CD4-positive, alpha-beta memory T cell (primary cell): ENCODE measurements at regions of chr1 and their contacts with region 1.

Region 1: DNA sequence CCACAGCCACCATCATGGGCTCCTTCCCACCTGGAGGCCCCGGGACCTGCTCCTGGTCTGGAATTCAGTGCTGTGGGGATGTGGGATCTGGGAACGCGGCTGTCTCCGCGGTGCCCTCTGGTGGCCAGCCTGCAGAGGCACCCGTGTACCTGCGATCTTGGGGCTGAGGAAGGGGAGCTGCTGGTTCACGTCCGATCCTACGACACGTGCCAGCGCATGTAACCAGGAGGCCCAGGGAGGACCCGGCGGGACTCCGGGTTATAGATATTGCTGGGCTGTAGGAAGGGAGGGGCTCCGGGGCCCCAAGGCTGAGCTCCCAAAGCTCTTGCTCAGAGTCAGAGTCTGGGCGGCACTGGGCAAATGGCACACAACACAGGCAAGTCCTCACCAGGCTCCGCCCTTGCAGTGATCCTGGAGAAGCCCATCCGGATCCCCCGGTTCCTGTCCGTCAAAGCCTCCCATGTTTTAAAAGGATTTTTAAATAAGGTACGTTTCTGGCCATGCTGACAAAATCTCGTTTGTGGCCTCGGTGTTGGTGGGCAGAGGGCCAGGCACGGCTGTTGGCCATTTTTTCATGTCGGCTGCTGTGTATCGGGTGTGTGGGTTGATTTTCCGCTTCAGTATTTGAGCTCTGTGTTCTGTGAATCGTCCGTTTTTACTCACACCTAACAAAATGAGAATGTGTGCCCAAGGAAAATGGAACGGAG is 20.1 kb downstream of the FAAP20 start:
- DNase-seq: peak in 4 of 5 donors; percentile 30 to 44 (median 40)
- H3K4me3 ChIP-seq: peak overlapping the region in 1 of 2 donors; percentile 35
- H3K4me3 Mint-ChIP-seq: peak overlapping the region; percentile 38 to 85 (median 68)
- H3K27ac ChIP-seq: no peak overlapping the region
- H3K27ac Mint-ChIP-seq: peak overlapping the region in 3 of 7 donors; percentile 46 to 57 (median 47)
- H3K4me1 ChIP-seq: peaks cover 8% of the 10 kb centered on the region
- H3K4me1 Mint-ChIP-seq: peaks cover 0 to 27% (median 3%) of the 10 kb centered on the region in 4 donors
- H3K27me3 ChIP-seq: no peaks in the 10 kb centered on the region
- H3K27me3 Mint-ChIP-seq: no peaks in the 10 kb centered on the region

Region 2: DNA sequence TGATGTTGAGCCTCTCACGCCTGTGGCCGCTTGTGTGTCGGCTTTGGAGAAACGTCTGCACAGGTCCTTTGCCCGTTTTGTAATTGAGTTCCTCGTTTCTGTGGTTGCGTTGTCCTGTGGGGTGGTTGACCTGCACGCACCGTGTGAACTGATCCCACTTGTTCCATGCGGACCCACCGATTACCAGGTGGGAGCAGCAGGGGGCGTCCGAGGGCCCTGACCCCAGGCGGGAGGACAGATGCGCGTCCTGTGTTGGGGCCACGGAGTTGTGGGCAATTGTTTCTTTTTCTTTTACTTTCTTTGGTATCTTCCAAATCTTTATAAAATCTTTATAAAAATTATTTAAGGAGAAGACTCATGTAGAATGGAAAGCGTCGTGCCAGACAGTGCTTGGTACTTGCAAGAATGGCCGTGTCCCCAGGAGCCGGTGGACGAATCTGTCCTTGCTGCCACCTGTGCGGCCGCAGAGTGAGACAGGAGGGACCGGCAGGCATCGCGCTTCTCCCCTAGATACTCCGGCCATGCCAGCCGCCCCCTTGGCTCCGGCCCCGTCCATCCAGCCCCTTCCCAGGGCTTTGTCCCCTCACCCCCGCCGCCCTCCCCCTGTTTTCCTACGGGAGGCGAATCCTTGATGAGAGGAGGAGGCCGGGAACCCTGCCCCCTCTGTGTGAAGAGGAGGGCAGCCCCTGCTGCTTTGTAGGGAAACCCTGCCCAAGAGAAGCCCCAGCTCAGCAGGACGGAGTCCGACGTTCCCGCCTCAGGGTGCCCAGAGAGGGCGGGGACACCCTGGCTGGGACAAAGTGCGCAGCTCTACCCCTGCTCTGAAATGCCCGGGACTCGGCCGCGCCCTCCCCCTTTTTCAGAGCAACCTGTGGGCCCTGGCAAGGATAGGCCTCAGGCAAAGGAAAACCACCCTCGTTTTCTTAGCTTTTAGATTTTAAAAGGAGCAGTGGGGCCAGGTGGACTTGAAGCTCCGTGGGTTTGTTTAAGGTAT is 82.6 kb before region 1 on chr1:
- CTCF ChIA-PET with region 1: interaction called, 9 read pairs
- POLR2A ChIA-PET with region 1: no interaction called
- intact Hi-C with region 1: loop called (anchors 1 kb)
- DNase-seq: peak in 4 of 5 donors; percentile 17 to 28 (median 26)
- H3K4me3 ChIP-seq: no peak overlapping the region
- H3K4me3 Mint-ChIP-seq: no peak overlapping the region
- H3K27ac ChIP-seq: no peak overlapping the region
- H3K27ac Mint-ChIP-seq: no peak overlapping the region
- H3K4me1 ChIP-seq: no peaks in the 10 kb centered on the region
- H3K4me1 Mint-ChIP-seq: peaks cover 4 to 6% (median 5%) of the 10 kb centered on the region in 4 donors
- H3K27me3 ChIP-seq: no peaks in the 10 kb centered on the region
- H3K27me3 Mint-ChIP-seq: no peaks in the 10 kb centered on the region

Region 3: DNA sequence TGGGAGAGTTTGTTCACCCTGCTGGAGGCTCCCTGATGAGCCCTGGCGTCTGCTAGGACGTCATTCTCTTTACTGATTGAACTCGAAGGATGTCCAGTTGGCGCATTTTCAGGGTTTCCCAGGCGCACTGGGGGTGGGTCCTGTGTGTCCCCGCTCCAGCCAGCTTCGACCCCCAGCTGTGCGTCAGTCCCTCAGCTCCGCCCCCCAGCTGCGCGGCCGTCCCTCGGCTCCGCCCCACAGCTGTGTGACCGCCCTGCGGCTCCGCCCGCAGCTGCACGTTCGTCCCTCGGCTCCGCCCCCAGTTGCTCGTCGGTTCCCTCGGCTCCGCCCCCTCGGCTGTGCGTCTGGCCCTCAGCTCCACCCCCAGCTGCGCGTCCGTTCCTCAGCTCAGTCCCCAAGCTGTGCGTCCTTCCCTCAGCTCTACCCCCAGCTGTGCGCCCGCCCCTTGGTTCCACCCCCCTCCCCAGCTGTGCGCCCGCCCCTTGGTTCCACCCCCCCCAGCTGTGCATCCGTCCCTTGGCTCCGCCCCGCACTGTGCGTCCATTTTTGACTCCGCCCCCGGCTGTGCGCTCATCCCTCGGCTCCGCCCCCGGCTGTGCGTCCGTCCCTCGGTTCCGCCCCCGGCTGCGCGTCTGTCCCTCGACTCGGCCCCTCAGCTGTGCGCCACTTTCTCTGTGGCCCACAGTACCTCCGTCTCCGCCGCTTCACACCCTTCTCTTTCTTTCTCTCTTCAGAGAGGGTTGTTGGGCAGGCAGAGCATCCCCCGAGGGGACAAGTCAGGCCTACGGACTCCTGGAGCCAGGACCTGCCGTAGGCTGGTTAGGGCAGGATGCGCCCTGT is 41.2 kb before region 1 on chr1:
- CTCF ChIA-PET with region 1: interaction called, 24 read pairs
- POLR2A ChIA-PET with region 1: no interaction called
- intact Hi-C with region 1: loop called (anchors 1 kb)
- DNase-seq: peak; percentile 97 to 98 (median 98)
- H3K4me3 ChIP-seq: peak overlapping the region; percentile 61 to 77
- H3K4me3 Mint-ChIP-seq: peak overlapping the region; percentile 82 to 92 (median 85)
- H3K27ac ChIP-seq: peak overlapping the region; percentile 64
- H3K27ac Mint-ChIP-seq: peak overlapping the region; percentile 81 to 98 (median 97)
- H3K4me1 ChIP-seq: peaks cover 11% of the 10 kb centered on the region
- H3K4me1 Mint-ChIP-seq: peaks cover 10 to 47% (median 28%) of the 10 kb centered on the region in 4 donors
- H3K27me3 ChIP-seq: no peaks in the 10 kb centered on the region
- H3K27me3 Mint-ChIP-seq: no peaks in the 10 kb centered on the region

Region 4: GRCh38 chr1:2148691-2149090 is 25.8 kb before region 1 on chr1:
- CTCF ChIA-PET with region 1: interaction called, 31 read pairs
- POLR2A ChIA-PET with region 1: interaction called, 3 read pairs
- intact Hi-C with region 1: no loop called
- DNase-seq: peak; percentile 74 to 89 (median 81)
- H3K4me3 ChIP-seq: peak overlapping the region in 1 of 2 donors; percentile 44
- H3K4me3 Mint-ChIP-seq: no peak overlapping the region
- H3K27ac ChIP-seq: peak overlapping the region; percentile 58
- H3K27ac Mint-ChIP-seq: no peak overlapping the region
- H3K4me1 ChIP-seq: peaks cover 47% of the 10 kb centered on the region
- H3K4me1 Mint-ChIP-seq: peaks cover 6 to 29% (median 13%) of the 10 kb centered on the region in 4 donors
- H3K27me3 ChIP-seq: no peaks in the 10 kb centered on the region
- H3K27me3 Mint-ChIP-seq: no peaks in the 10 kb centered on the region

Region 5: GRCh38 chr1:2163205-2163604 is 11.3 kb before region 1 on chr1:
- CTCF ChIA-PET with region 1: interaction called, 13 read pairs
- POLR2A ChIA-PET with region 1: no interaction called
- intact Hi-C with region 1: no loop called
- DNase-seq: peak in 1 of 5 donors; percentile 16
- H3K4me3 ChIP-seq: no peak overlapping the region
- H3K4me3 Mint-ChIP-seq: no peak overlapping the region
- H3K27ac ChIP-seq: no peak overlapping the region
- H3K27ac Mint-ChIP-seq: no peak overlapping the region
- H3K4me1 ChIP-seq: no peaks in the 10 kb centered on the region
- H3K4me1 Mint-ChIP-seq: no peaks in the 10 kb centered on the region
- H3K27me3 ChIP-seq: no peaks in the 10 kb centered on the region
- H3K27me3 Mint-ChIP-seq: no peaks in the 10 kb centered on the region

Region 6: DNA sequence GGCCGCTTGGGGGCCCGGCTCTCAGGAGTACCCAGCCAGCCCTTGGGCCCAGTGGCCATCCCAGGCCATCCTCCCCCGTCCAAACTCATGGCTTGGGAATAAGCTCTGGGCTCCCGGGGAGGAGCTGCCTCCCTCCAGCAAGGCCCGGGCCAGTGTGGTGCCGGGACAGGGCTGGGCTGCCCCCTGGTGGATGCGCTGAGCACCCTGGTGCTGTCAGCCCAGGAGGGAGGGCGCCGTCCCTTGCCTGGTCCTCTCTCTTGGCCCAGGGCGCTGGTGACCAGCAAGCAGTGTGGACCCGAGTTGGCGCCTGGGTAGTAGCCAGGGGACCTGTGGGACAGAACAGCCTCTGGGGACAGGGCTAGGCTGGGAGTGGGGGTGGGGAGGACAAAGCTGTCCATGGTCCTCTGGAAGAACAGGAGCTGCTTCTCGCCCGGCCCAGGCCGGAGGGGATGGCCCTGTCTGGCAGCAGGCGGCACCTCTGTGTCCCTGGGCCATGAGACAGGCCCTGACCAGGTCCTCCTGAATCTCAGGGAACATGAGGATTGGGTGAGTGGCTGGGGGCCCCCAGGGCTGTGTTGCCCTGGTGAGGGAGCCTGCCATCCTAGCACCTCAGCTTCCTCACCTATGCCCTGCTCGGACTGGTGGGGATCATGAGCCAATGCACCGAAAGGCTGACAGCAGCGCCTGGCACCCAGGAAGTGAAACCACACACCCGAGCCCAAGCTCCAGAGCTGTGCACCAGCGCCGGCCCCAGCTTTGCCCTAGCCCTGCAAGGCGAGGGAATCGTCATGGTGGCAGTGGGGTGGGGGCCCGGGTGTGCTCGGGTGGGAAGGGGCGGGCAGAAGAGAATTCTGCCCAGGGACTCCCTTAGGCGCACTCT is 207.5 kb after region 1 on chr1:
- CTCF ChIA-PET with region 1: interaction called, 13 read pairs
- POLR2A ChIA-PET with region 1: no interaction called
- intact Hi-C with region 1: no loop called
- DNase-seq: peak; percentile 65 to 76 (median 70)
- H3K4me3 ChIP-seq: no peak overlapping the region
- H3K4me3 Mint-ChIP-seq: no peak overlapping the region
- H3K27ac ChIP-seq: no peak overlapping the region
- H3K27ac Mint-ChIP-seq: peak overlapping the region in 1 of 7 donors; percentile 35
- H3K4me1 ChIP-seq: peaks cover 9% of the 10 kb centered on the region
- H3K4me1 Mint-ChIP-seq: peaks cover 0 to 3% (median 0%) of the 10 kb centered on the region in 4 donors
- H3K27me3 ChIP-seq: no peaks in the 10 kb centered on the region
- H3K27me3 Mint-ChIP-seq: no peaks in the 10 kb centered on the region